HepG2 (cell line): ENCODE measurements at regions of chr6 and their contacts with region 1.

Region 1: DNA sequence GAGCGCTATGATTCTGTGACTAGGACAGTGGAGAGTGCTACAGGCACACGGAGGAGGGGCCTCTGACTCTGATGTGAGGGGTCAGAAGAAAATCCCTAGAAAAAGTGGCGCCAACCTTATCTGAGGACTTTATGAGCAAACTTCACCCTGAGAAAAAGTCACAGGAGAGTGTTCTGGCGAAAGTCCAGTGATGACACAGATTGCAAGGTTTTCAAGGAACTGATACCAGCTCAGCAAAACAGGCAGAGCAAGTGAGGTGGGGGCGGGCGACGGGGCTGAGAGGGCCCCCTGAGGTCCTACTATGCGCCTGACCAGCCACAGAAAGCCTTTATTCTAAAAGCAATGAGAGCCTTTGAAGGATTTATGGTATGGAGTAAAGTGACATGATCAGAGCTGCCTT is 73.3 kb downstream of the SLC22A23 start:
- DNase-seq: peak; percentile 88
- ATAC-seq: no peak
- H3K4me3 ChIP-seq: no peak overlapping the region
- H3K27ac ChIP-seq: peak overlapping the region; percentile 95
- H3K4me1 ChIP-seq: peaks cover 80% of the 10 kb centered on the region
- H3K27me3 ChIP-seq: no peaks in the 10 kb centered on the region
- CTCF ChIP-seq: 0 out of 2 replicates have a peak, but pooled peaks have one; percentile 3
- EP300 ChIP-seq: peak in 1 of 2 experiments; percentile 81; a peak in 2 of 4 replicates
- POLR2A ChIP-seq: no peak
- RAD21 ChIP-seq: 0 out of 2 replicates have a peak, but pooled peaks have one; percentile 30

Region 2: DNA sequence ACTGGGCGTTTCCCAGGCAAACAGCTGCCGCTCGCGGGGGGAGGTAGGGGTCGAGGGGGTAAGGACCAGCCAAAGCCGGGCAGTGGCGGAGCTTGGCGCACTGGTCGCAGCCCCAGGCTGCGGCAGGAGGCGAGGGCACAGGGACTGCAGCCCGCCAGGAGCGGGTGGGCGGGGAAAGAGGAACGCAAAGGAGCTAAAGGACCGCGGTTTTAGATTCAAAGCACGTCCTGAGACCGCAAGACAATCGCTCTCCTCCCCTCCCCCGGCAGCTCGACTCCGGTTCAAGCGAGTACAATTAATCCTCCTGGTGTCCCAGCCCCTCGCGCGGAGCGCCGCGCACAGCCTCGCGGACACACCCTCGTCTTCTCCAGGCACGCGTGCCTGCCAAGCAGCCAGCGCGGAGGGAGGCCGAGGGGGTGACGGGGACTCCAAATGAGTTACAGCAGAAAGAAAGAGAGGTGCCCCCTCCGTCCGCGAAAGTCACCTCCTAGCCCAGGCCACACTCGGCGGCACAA is 156.6 kb before region 1 on chr6:
- CTCF ChIA-PET with region 1: no interaction called
- POLR2A ChIA-PET with region 1: no interaction called
- in situ Hi-C with region 1: no loop called
- intact Hi-C with region 1: no loop called
- DNase-seq: no peak
- ATAC-seq: peak; percentile 3
- H3K4me3 ChIP-seq: peak overlapping the region; percentile 40 to 79 (median 60); a peak in 4 of 6 replicates
- H3K27ac ChIP-seq: no peak overlapping the region
- H3K4me1 ChIP-seq: peaks cover 48% of the 10 kb centered on the region
- H3K27me3 ChIP-seq: peaks cover 26 to 60% of the 10 kb centered on the region in 2 experiments
- CTCF ChIP-seq: no peak
- EP300 ChIP-seq: no peak
- POLR2A ChIP-seq: no peak
- RAD21 ChIP-seq: no peak

Region 3: GRCh38 chr6:3356056-3356761 is 27.3 kb before region 1 on chr6:
- CTCF ChIA-PET with region 1: no interaction called
- POLR2A ChIA-PET with region 1: interaction called, 101 read pairs
- in situ Hi-C with region 1: no loop called
- intact Hi-C with region 1: loop called (anchors 1 kb)
- DNase-seq: peak; percentile 65
- ATAC-seq: peak; percentile 56
- H3K4me3 ChIP-seq: peak overlapping the region; percentile 12 to 47 (median 17); a peak in 5 of 6 replicates
- H3K27ac ChIP-seq: peak overlapping the region; percentile 98
- H3K4me1 ChIP-seq: peaks cover 89% of the 10 kb centered on the region
- H3K27me3 ChIP-seq: no peaks in the 10 kb centered on the region
- CTCF ChIP-seq: no peak
- EP300 ChIP-seq: no peak
- POLR2A ChIP-seq: peak in 1 of 2 experiments; percentile 42; a peak in 1 of 4 replicates
- RAD21 ChIP-seq: no peak

Region 4: GRCh38 chr6:3363296-3364025 is 20.1 kb before region 1 on chr6:
- CTCF ChIA-PET with region 1: no interaction called
- POLR2A ChIA-PET with region 1: interaction called, 101 read pairs
- in situ Hi-C with region 1: no loop called
- intact Hi-C with region 1: no loop called
- DNase-seq: peak; percentile 43
- ATAC-seq: no peak
- H3K4me3 ChIP-seq: no peak overlapping the region
- H3K27ac ChIP-seq: peak overlapping the region; percentile 11
- H3K4me1 ChIP-seq: peaks cover 95% of the 10 kb centered on the region
- H3K27me3 ChIP-seq: no peaks in the 10 kb centered on the region
- CTCF ChIP-seq: no peak
- EP300 ChIP-seq: no peak
- POLR2A ChIP-seq: no peak
- RAD21 ChIP-seq: no peak

Region 5: DNA sequence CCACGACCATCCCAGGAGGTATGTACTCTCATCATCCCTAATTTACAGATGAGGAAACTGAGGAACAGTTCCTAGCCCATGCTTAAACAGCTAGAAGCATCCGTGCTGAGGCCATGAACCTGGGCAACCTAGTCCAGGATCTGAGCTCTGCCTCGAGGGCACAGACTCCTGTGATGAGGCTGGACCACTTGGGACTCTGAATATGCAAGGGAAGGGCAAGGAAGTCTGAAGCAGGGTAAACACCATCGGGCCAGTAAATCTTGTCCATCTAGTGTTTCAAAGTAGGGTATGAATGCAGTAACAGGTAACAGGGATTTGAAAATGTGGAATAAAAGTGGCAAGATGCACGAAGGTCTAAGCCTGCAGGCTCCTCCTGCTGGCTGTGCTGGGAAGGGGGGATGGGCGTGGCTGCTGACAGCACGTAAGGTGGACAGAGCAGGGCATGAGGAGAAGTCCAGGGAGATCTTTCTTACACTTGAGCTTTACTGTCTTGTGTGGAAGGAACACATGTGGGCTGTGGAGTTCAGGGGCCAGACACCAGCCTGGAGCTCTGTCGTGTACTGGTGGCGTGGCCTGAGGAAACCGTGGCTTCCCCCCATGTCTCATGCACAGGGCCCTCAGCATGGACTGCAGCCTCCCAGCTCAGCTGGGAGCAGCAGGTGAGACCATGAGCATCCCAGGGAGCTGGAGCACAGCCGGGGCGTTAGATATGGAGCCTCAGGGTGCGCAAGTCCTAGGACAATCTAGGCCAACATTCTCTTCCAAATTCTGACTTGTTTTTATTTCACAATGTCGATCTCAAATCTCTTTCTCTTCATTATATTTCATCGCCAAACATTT is 11.3 kb before region 1 on chr6:
- CTCF ChIA-PET with region 1: no interaction called
- POLR2A ChIA-PET with region 1: interaction called, 101 read pairs
- in situ Hi-C with region 1: no loop called
- intact Hi-C with region 1: no loop called
- DNase-seq: no peak
- ATAC-seq: no peak
- H3K4me3 ChIP-seq: no peak overlapping the region
- H3K27ac ChIP-seq: peak overlapping the region; percentile 85
- H3K4me1 ChIP-seq: peaks cover 100% of the 10 kb centered on the region
- H3K27me3 ChIP-seq: no peaks in the 10 kb centered on the region
- CTCF ChIP-seq: peak; percentile 56
- EP300 ChIP-seq: no peak
- POLR2A ChIP-seq: no peak
- RAD21 ChIP-seq: peak; percentile 19; the same call in 1 of the 2 replicates

Region 6: GRCh38 chr6:3518356-3519225 is 135.1 kb after region 1 on chr6:
- CTCF ChIA-PET with region 1: no interaction called
- POLR2A ChIA-PET with region 1: no interaction called
- in situ Hi-C with region 1: no loop called
- intact Hi-C with region 1: no loop called
- DNase-seq: peak; percentile 44
- ATAC-seq: peak; percentile 88
- H3K4me3 ChIP-seq: peak overlapping the region in 1 of 3 experiments; percentile 31; a peak in 2 of 6 replicates
- H3K27ac ChIP-seq: no peak overlapping the region
- H3K4me1 ChIP-seq: peaks cover 19% of the 10 kb centered on the region
- H3K27me3 ChIP-seq: peaks cover 2 to 49% of the 10 kb centered on the region in 2 experiments; a peak in 3 of 5 replicates
- CTCF ChIP-seq: no peak
- EP300 ChIP-seq: no peak
- POLR2A ChIP-seq: no peak
- RAD21 ChIP-seq: no peak